ENCODE measurements at regions of chr10 and their contacts with region 1.

Region 1: GRCh38 chr10:121734589-121735045 is 136.4 kb upstream of the FGFR2 start:
- DNase-seq: peak; percentile 70
- H3K4me3 ChIP-seq: no peak overlapping the region
- H3K27ac ChIP-seq: no peak overlapping the region
- H3K4me1 ChIP-seq: peaks cover 0 to 19% of the 10 kb centered on the region in 2 experiments; a peak in 2 of 4 replicates
- H3K27me3 ChIP-seq: no peaks in the 10 kb centered on the region
- CTCF ChIP-seq: peak; percentile 88
- EP300 ChIP-seq: no peak
- RAD21 ChIP-seq: peak; percentile 77

Region 2: DNA sequence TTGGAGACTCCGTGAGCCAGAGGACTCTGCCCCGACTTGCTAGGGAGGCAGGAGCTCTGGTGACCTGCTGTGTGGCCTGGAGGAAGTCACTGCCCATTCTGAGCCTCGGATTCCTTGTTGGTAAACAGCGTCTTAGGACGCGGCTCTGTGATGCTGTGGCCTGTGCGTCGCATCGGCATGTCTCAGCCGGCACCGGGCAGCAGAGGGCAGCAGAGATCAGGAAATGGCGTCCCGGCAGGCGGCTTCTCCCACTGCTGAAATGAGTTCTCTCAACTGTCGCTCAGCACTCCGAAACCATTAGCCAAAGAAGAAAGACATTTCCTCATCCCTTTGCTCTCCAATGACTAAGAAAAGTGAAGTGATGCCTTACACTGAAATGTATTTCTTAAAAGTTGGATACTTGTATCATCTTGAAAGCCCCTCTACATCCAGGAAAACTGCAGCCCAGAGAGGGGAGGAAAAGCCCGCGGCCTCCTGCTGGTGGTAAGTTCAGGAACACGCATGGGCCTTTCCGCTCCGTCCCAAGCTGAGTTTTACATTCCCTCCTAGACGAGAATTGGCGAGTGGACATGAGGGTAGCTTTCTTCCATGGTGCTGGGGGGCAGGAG is 791.7 kb before region 1 on chr10:
- CTCF ChIA-PET with region 1: interaction called, 16 read pairs
- POLR2A ChIA-PET with region 1: no interaction called
- DNase-seq: peak; percentile 86
- H3K4me3 ChIP-seq: peak overlapping the region in 1 of 2 experiments; percentile 31; a peak in 1 of 4 replicates
- H3K27ac ChIP-seq: no peak overlapping the region
- H3K4me1 ChIP-seq: peaks cover 0 to 3% of the 10 kb centered on the region in 2 experiments; a peak in 1 of 4 replicates
- H3K27me3 ChIP-seq: no peaks in the 10 kb centered on the region
- CTCF ChIP-seq: peak; percentile 87
- EP300 ChIP-seq: no peak
- RAD21 ChIP-seq: peak; percentile 95

Region 3: GRCh38 chr10:121627821-121628581 is 106.6 kb before region 1 on chr10:
- CTCF ChIA-PET with region 1: interaction called, 10 read pairs
- POLR2A ChIA-PET with region 1: no interaction called
- DNase-seq: no peak
- H3K4me3 ChIP-seq: no peak overlapping the region
- H3K27ac ChIP-seq: no peak overlapping the region
- H3K4me1 ChIP-seq: peaks cover 0 to 5% of the 10 kb centered on the region in 2 experiments; a peak in 1 of 4 replicates
- H3K27me3 ChIP-seq: no peaks in the 10 kb centered on the region
- CTCF ChIP-seq: no peak
- EP300 ChIP-seq: no peak
- RAD21 ChIP-seq: no peak

Region 4: DNA sequence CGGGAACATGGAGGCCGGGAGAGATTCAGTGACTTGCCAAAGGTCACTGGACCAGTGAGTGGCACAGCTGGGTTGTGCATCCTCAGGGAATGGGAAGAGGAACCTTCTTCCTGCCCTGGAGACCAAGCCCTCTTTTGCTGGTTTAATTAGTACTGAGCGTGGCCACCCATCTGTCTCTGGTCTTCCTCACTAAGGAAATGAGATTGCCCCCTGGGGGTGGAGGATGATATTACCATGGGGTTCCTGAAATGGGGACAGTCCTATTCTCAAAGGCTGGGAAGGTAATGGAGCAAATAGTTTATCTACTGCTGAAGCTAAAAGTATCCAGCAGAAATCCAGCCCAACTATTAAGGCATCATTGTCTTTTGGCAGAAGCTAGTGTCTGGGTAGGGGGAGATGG is 37.8 kb before region 1 on chr10:
- CTCF ChIA-PET with region 1: interaction called, 10 read pairs
- POLR2A ChIA-PET with region 1: no interaction called
- DNase-seq: peak; percentile 45
- H3K4me3 ChIP-seq: no peak overlapping the region
- H3K27ac ChIP-seq: no peak overlapping the region
- H3K4me1 ChIP-seq: peaks cover 0 to 25% of the 10 kb centered on the region in 2 experiments; a peak in 2 of 4 replicates
- H3K27me3 ChIP-seq: no peaks in the 10 kb centered on the region
- CTCF ChIP-seq: peak; percentile 52
- EP300 ChIP-seq: no peak
- RAD21 ChIP-seq: peak; percentile 29; the same call in 1 of the 2 replicates

Region 5: GRCh38 chr10:121722665-121723064 is 12.0 kb before region 1 on chr10:
- CTCF ChIA-PET with region 1: interaction called, 61 read pairs
- POLR2A ChIA-PET with region 1: no interaction called
- DNase-seq: no peak
- H3K4me3 ChIP-seq: no peak overlapping the region
- H3K27ac ChIP-seq: no peak overlapping the region
- H3K4me1 ChIP-seq: no peaks in the 10 kb centered on the region
- H3K27me3 ChIP-seq: no peaks in the 10 kb centered on the region
- CTCF ChIP-seq: no peak
- EP300 ChIP-seq: no peak
- RAD21 ChIP-seq: no peak

Region 6: DNA sequence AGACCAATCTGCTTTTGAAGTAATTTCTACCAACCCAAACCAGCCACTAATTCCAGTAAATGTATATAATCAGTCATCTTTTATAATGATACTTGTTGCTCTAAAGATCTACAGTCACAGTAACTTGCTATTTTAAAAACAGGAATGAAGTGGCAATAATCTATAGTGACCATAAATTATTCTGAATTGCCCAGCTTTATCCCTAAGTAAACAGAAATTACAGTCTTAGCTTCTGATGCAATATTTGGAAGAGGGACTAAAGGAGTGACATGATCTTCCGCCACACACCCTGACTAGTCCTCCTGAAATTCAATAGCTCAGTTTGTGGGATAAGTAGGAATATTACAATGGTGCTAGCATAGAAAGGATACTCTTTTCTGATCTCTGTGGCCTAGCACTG is 97.2 kb after region 1 on chr10:
- CTCF ChIA-PET with region 1: no interaction called
- POLR2A ChIA-PET with region 1: no interaction called
- DNase-seq: no peak
- H3K4me3 ChIP-seq: no peak overlapping the region
- H3K27ac ChIP-seq: no peak overlapping the region
- H3K4me1 ChIP-seq: no peaks in the 10 kb centered on the region
- H3K27me3 ChIP-seq: no peaks in the 10 kb centered on the region
- CTCF ChIP-seq: no peak
- EP300 ChIP-seq: no peak
- RAD21 ChIP-seq: no peak